ENCODE measurements at regions of chr3 and their contacts with region 1.

Region 1: DNA sequence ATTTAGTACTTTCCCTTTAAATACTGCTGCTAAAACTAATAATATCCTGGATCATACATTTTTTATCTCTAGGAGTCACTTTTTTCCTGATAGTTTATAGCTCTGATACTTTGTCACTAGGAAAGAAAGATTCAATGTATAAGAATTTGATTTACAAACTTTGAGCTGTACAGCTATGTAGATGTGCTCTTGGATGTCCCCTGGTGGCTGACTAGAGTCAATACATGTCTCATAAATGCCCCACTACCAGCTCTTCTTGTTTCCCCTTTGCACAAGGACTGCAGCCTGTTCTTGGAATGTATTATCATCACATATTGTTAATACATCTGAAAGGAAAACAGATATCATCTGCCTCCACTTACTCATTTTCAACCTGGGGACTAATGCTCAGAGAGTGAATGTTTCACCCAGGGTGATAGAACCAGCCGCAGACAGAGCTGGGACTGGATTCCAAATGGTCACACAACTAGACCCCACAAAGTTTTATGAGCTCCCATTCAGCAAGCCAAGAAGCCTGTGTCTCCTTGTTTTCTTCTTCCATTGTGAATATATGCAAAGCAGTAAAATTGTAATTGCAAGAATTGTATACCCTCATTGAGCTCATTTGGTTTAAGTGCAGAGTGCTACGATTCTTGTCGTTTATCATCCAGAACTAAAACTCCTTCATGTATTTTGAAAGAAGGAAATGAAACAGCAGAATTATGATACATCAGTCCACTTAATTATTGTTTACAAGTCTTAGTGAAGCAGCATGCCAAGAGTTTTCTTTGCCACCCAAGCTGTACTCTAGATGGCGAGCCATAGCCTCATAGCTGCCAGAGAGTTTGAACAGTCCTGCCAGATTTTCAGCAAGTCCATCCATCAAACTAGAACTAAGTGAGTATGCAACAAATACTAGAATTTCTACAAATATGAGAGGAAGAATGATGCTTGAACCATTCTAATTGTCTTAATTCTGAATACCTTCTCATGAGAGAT is 261.6 kb upstream of the LMCD1 start:
- DNase-seq: peak; percentile 46
- ATAC-seq: peak; percentile 65
- H3K4me3 Mint-ChIP-seq: no peak overlapping the region
- H3K27ac Mint-ChIP-seq: no peak overlapping the region
- H3K4me1 Mint-ChIP-seq: no peaks in the 10 kb centered on the region
- H3K27me3 Mint-ChIP-seq: no peaks in the 10 kb centered on the region

Region 2: DNA sequence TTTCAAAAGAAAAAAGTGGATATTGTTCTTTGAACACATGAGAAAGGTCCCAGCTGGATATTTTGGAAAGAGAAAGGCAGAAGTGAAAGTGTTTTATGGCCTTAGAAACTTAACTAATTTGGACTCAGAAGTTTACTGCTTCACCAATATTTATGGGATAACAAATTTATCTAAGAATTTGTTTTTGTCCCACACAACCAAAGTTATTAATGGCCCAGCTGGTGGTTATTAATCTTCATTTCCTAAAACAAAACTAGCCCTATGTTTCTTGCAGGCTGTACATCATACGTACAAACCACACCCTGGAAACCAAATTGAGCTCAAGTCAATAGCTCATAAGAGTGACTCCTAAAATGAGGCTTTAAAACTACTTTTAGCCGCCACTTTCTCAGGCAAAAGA is 111.3 kb before region 1 on chr3:
- CTCF ChIA-PET with region 1: no interaction called
- POLR2A ChIA-PET with region 1: no interaction called
- DNase-seq: no peak
- ATAC-seq: no peak
- H3K4me3 Mint-ChIP-seq: no peak overlapping the region
- H3K27ac Mint-ChIP-seq: no peak overlapping the region
- H3K4me1 Mint-ChIP-seq: no peaks in the 10 kb centered on the region
- H3K27me3 Mint-ChIP-seq: no peaks in the 10 kb centered on the region

Region 3: GRCh38 chr3:8254489-8254888 is 14.5 kb after region 1 on chr3:
- CTCF ChIA-PET with region 1: interaction called, 10 read pairs
- POLR2A ChIA-PET with region 1: no interaction called
- DNase-seq: no peak
- ATAC-seq: no peak
- H3K4me3 Mint-ChIP-seq: no peak overlapping the region
- H3K27ac Mint-ChIP-seq: no peak overlapping the region
- H3K4me1 Mint-ChIP-seq: no peaks in the 10 kb centered on the region
- H3K27me3 Mint-ChIP-seq: no peaks in the 10 kb centered on the region